ENCODE measurements at regions of chr7 and their contacts with region 1.

Region 1: GRCh38 chr7:2567679-2568278 is 9.0 kb downstream of the IQCE start:
- DNase-seq: peak in 2 of 3 donors; percentile 39 to 60
- ATAC-seq: peak; percentile 73 to 79
- H3K4me3 ChIP-seq: no peak overlapping the region
- H3K27ac ChIP-seq: no peak overlapping the region
- H3K4me1 ChIP-seq: no peaks in the 10 kb centered on the region
- H3K27me3 ChIP-seq: no peaks in the 10 kb centered on the region

Region 2: DNA sequence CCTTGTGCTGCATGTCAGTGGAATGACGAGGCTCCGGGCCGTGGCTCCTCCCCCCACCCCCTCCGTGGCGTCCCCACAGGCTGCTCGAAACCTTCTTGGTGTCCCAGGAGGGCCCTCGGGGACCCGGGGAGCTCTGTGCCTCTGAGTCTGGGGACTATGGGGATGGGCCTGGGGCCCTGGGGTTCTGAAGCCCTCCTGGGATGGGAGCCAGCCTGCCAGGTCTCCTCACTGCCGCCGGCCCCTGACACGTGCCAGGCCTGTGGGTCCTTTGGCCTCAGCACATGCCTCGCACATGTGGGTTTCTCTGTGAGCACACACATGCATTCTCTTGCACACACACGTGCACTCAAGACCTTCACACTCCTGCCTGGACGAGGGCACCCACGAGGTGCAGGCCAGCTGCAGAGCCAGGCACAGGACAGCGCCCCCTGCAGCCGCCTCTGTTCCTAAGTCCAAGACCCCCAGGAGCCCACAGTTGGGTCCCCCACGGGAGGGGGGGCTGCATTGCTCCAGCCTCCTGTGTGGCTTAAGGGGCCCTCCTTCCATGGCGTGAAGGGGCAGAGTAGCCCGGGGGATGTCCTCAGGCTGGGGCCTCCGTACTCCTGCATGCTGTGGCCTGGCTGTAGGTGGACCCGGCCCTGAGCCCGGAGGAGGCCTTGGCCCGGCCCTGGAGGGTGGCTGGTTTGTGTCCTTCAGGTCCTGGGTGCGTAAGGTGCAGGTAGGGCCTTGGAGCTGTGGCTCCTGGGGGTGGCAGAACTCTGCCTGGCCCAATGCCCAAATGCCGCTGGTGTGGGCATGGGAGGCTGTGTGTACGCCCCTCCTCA is 93.0 kb after region 1 on chr7:
- intact Hi-C with region 1: loop called in 1 of 4 experiments (anchors 5 kb)
- DNase-seq: peak; percentile 19 to 66 (median 65)
- ATAC-seq: no peak
- H3K4me3 ChIP-seq: no peak overlapping the region
- H3K27ac ChIP-seq: no peak overlapping the region
- H3K4me1 ChIP-seq: peaks cover 3% of the 10 kb centered on the region
- H3K27me3 ChIP-seq: no peaks in the 10 kb centered on the region

Measured in right cardiac atrium (tissue), 5 donors.